HEK293 (cell line): ENCODE measurements at regions of chr18 and their contacts with region 1.

Region 1: GRCh38 chr18:37385846-37386778 is 179.5 kb downstream of the CELF4 start:
- H3K4me3 ChIP-seq: no peak overlapping the region
- H3K27ac ChIP-seq: no peak overlapping the region
- H3K4me1 ChIP-seq: no peaks in the 10 kb centered on the region
- CTCF ChIP-seq: 0 out of 2 replicates have a peak, but pooled peaks have one; percentile 25

Region 2: DNA sequence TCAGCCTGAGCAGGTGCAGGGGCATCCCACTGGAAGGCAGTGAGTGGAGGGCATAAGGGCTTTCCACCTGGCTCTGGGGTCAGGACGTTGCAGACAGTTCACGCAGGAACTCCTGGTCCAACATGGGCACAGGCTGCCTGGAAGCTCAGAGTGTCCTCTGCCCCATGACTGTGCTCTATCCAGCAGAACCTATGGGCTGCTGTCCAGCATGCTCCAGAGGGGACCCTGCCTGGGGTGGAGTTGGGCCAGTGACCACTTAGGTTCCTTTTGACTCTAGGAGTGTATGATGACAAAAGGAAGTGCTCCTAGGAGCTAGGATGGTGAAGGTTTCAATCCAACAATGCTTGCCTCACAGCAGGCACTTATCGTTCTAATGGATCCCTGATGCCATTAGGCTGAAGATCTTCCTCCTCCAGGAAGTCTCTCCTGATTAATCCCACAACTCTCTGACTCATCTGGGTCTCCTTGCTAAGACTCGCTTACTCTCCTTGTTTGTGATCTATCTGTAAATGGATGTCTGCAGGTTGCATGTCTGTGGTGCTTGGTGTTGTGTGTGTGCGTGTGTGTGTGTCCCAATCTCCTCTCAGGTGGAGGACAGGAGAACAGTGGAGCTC is 44.5 kb before region 1 on chr18:
- CTCF ChIA-PET with region 1: interaction called, 11 read pairs
- POLR2A ChIA-PET with region 1: no interaction called
- H3K4me3 ChIP-seq: no peak overlapping the region
- H3K27ac ChIP-seq: no peak overlapping the region
- H3K4me1 ChIP-seq: no peaks in the 10 kb centered on the region
- CTCF ChIP-seq: no peak

Region 3: DNA sequence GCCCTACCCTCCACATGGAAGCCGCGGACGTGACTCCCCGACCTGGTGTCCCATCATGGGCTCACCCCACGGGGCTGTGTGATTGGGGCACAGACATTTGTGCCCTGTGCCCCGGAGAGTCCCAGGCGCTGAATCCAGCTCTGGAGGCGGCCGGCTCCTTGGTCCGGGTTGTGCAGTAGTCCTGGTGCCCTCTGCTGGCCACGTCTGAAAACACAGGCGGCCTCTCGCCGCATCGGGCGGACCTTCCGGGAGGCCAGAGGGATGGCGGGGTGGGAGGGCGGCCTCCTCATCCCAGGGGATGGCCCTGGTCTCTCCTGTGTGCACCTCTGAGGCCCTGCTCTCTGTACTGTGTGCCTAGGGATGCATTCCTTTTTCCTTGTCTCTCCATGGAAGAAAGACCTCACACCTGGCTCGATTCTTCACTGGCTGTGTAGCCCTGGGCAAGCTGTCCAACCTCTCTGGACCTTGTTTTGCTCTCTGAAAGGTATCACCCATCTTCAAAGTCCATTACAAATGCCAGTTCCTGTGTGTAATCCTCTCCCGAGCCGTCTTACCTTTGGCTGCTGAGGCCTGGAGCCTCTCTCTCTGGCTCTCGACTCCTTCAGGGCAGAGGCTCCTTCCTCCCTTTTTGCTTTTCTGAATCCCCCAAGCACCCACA is 151.9 kb after region 1 on chr18:
- CTCF ChIA-PET with region 1: interaction called, 15 read pairs
- POLR2A ChIA-PET with region 1: no interaction called
- H3K4me3 ChIP-seq: no peak overlapping the region
- H3K27ac ChIP-seq: no peak overlapping the region
- H3K4me1 ChIP-seq: no peaks in the 10 kb centered on the region
- CTCF ChIP-seq: peak; percentile 65; the same call in 1 of the 2 replicates